Activated CD4-positive, alpha-beta T cell treated with anti-CD3 and anti-CD28 coated beads for 36 hours (primary cell): ENCODE measurements at regions of chr19 and their contacts with region 1.

Region 1: DNA sequence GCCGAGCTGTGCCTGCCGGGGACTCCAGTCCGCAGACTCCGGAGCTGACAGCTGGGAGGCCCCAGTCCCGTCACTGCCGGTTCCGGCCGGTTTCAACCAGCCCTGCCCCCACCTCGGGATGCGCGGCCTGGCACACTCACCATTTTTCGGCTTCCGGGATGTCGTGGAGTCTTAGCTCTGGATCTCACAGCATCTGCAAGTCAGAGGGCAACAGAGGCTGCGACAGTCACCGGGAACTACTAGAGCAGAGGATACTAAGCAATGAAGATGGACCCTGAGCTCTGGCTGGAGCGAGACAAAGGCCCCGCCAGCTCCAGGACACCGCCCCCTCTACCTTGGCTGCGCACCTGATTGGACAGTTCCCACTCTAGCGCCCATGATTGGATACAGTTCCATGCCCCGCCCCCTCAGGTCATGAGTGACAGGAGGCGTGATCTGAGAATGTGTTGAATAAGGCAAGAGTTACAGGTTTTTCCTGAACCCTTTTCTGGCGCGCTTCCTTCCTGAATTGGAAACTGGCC is at the start of gene ZNF682:
- DNase-seq: peak; percentile 98
- ATAC-seq: peak; percentile 100
- H3K4me3 Mint-ChIP-seq: peak within 1 kb of the TSS; percentile 94
- H3K27ac Mint-ChIP-seq: peak within 1 kb of the TSS; percentile 94
- H3K4me1 Mint-ChIP-seq: peaks cover 16% of the 10 kb centered on the region
- H3K27me3 Mint-ChIP-seq: peaks cover 5% of the 10 kb centered on the region
- total RNA-seq, gene ZNF682: 6.0 to 7.5 TPM

Region 2: GRCh38 chr19:19865739-19866481 is 173.4 kb before region 1 on chr19 and contains the start of gene ZNF253:
- CTCF ChIA-PET with region 1: no interaction called
- POLR2A ChIA-PET with region 1: interaction called, 3 read pairs
- intact Hi-C with region 1: loop called in 1 of 2 experiments (anchors 1 kb)
- DNase-seq: peak; percentile 98
- ATAC-seq: peak; percentile 93
- H3K4me3 Mint-ChIP-seq: peak within 1 kb of the TSS; percentile 88
- H3K27ac Mint-ChIP-seq: peak within 1 kb of the TSS; percentile 98
- H3K4me1 Mint-ChIP-seq: peaks cover 21% of the 10 kb centered on the region
- H3K27me3 Mint-ChIP-seq: no peaks in the 10 kb centered on the region
- total RNA-seq, gene ZNF253: 16.1 to 25.1 TPM

Region 3: DNA sequence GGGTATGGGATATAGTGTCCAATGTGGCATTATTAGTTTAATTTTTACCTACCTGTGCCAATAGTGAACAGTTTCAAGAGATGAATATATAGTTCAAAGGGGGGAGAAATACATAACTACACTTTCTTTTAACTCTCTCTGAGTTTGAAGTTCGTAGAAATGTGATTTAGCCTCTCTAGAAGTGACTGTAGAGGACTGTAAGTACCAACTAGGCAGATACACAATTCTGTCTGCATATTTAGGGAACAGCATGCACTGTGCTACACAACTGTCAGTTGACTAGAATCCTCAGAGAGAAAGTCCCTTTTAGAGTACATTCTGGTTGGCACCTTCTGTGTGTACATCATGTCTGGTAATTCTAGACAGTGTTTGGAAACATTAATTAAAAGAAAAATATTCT is 21.0 kb after region 1 on chr19:
- CTCF ChIA-PET with region 1: no interaction called
- POLR2A ChIA-PET with region 1: no interaction called
- intact Hi-C with region 1: no loop called
- DNase-seq: no peak
- ATAC-seq: peak; percentile 44
- H3K4me3 Mint-ChIP-seq: no peak overlapping the region
- H3K27ac Mint-ChIP-seq: no peak overlapping the region
- H3K4me1 Mint-ChIP-seq: peaks cover 1% of the 10 kb centered on the region
- H3K27me3 Mint-ChIP-seq: peaks cover 5% of the 10 kb centered on the region

Region 4: DNA sequence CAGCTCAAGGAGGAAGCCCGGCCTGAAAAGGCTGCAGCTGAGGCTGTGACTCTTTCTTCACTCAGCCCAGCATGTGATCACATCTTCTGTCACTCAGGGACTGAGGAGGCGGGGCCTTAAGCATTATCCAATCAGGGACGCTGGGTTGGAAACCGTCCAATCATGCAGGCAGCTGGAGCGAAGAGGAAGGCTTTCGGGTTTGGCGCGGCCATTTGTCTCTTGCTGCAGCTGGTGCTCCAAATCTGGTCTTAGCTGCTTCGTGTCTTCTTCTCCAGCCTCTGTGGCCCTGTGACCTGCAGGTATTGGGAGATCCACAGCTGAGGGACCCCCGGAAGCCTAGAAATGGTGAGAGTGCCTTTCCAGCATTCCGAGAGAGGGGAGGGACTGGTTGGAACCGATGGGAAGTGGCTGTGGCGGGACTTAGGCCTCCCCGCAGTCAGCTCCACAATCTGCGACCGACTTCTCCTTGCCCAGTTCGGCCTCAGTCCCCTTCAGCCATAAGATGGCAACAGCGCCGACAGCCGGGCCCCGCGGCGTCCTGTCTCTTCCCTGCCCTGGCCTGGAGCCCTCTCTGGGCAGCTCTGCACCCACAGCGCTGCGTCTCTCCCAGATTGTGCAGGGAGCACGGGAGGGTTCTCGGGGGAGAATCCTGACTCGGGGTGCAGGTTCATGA is 38.7 kb after region 1 on chr19 and contains the start of gene ZNF90:
- CTCF ChIA-PET with region 1: no interaction called
- POLR2A ChIA-PET with region 1: interaction called, 11 read pairs
- intact Hi-C with region 1: loop called (anchors 1 to 5 kb)
- DNase-seq: peak; percentile 96
- ATAC-seq: peak; percentile 100
- H3K4me3 Mint-ChIP-seq: peak within 1 kb of the TSS; percentile 97
- H3K27ac Mint-ChIP-seq: peak within 1 kb of the TSS; percentile 73
- H3K4me1 Mint-ChIP-seq: peaks cover 11% of the 10 kb centered on the region
- H3K27me3 Mint-ChIP-seq: no peaks in the 10 kb centered on the region
- total RNA-seq, gene ZNF90: 21.6 to 22.9 TPM

Region 5: GRCh38 chr19:20151617-20152145 is 112.4 kb after region 1 on chr19:
- CTCF ChIA-PET with region 1: no interaction called
- POLR2A ChIA-PET with region 1: no interaction called
- intact Hi-C with region 1: no loop called
- DNase-seq: no peak
- ATAC-seq: no peak
- H3K4me3 Mint-ChIP-seq: no peak overlapping the region
- H3K27ac Mint-ChIP-seq: no peak overlapping the region
- H3K4me1 Mint-ChIP-seq: no peaks in the 10 kb centered on the region
- H3K27me3 Mint-ChIP-seq: no peaks in the 10 kb centered on the region

Region 6: DNA sequence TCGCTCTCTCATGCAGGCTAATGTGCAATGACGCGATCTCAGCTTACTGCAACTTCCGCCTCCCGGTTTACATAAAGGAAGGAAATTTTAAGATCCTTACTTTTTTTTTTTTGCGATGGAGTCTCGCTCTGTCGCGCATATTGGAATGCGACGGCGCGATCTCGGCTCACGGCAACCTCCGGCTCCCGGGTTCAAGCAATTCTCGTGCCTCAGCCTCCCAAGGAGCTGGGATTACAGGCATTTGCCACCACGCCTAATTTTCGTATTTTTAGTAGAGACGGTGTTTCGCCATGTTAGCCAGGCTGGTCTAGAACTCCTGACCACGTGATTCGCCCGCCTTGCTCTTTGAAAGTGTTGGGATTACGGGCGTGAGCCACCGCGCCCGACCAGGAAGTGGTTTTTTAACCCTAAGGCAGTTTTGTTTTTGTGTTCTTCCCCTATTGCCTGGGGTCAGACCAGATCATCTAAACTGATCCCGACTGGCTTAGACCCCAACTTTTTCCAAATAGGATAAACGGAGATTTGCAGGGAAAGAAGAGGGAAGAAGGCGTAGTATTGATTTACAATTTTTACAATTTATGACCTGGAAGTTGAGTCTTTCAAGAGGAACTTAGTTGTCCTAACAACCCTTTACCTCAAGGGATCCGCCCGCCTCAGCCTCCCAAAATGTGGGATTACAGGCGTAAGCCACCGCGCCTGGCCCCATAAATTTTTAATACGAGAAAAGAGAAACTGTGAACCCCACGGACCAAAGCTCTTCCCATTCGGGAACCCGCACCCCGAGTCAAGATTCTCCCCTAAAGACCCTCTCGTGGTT is 384.3 kb after region 1 on chr19:
- CTCF ChIA-PET with region 1: no interaction called
- POLR2A ChIA-PET with region 1: no interaction called
- intact Hi-C with region 1: loop called in 1 of 2 experiments (anchors 5 kb)
- DNase-seq: peak; percentile 61
- ATAC-seq: no peak
- H3K4me3 Mint-ChIP-seq: peak overlapping the region; percentile 96
- H3K27ac Mint-ChIP-seq: peak overlapping the region; percentile 99
- H3K4me1 Mint-ChIP-seq: peaks cover 9% of the 10 kb centered on the region
- H3K27me3 Mint-ChIP-seq: no peaks in the 10 kb centered on the region